GM12878 (cell line): ENCODE measurements at regions of chrX and their contacts with region 1.

Region 1: GRCh38 chrX:149205937-149206336 is 299.2 kb downstream of the IDS start:
- DNase-seq: no peak
- ATAC-seq: peak; percentile 59
- H3K4me3 ChIP-seq: no peak overlapping the region
- H3K27ac ChIP-seq: peak overlapping the region; percentile 49; the same call in 1 of the 2 replicates
- H3K4me1 ChIP-seq: no peaks in the 10 kb centered on the region
- H3K27me3 ChIP-seq: no peaks in the 10 kb centered on the region
- CTCF ChIP-seq: no peak
- EP300 ChIP-seq: no peak
- POLR2A ChIP-seq: no peak
- RAD21 ChIP-seq: no peak

Region 2: GRCh38 chrX:148380650-148381561 is 825.0 kb before region 1 on chrX:
- CTCF ChIA-PET with region 1: no interaction called
- POLR2A ChIA-PET with region 1: no interaction called
- RAD21 ChIA-PET with region 1: no interaction called
- SMC1A ChIA-PET with region 1: no interaction called
- in situ Hi-C with region 1: no loop called
- intact Hi-C with region 1: no loop called
- DNase-seq: peak; percentile 55
- ATAC-seq: peak; percentile 98
- H3K4me3 ChIP-seq: peak overlapping the region; percentile 56
- H3K27ac ChIP-seq: peak overlapping the region; percentile 47
- H3K4me1 ChIP-seq: peaks cover 6% of the 10 kb centered on the region; the same call in 1 of the 2 replicates
- H3K27me3 ChIP-seq: no peaks in the 10 kb centered on the region
- CTCF ChIP-seq: no peak
- EP300 ChIP-seq: 0 out of 4 replicates have a peak, but pooled peaks of 1 of the 2 experiments have one; percentile 9
- POLR2A ChIP-seq: no peak
- RAD21 ChIP-seq: no peak

Region 3: GRCh38 chrX:148609515-148610327 is 596.2 kb before region 1 on chrX:
- CTCF ChIA-PET with region 1: no interaction called
- POLR2A ChIA-PET with region 1: no interaction called
- RAD21 ChIA-PET with region 1: no interaction called
- SMC1A ChIA-PET with region 1: no interaction called
- in situ Hi-C with region 1: no loop called
- intact Hi-C with region 1: loop called (anchors 10 kb)
- DNase-seq: peak; percentile 40
- ATAC-seq: peak; percentile 90
- H3K4me3 ChIP-seq: peak overlapping the region; percentile 37
- H3K27ac ChIP-seq: peak overlapping the region; percentile 75
- H3K4me1 ChIP-seq: peaks cover 13% of the 10 kb centered on the region
- H3K27me3 ChIP-seq: no peaks in the 10 kb centered on the region
- CTCF ChIP-seq: no peak
- EP300 ChIP-seq: peak in 1 of 2 experiments; percentile 2; a peak in 1 of 4 replicates
- POLR2A ChIP-seq: no peak
- RAD21 ChIP-seq: no peak

Region 4: GRCh38 chrX:149120459-149120858 is 85.5 kb before region 1 on chrX:
- CTCF ChIA-PET with region 1: interaction called, 4 read pairs
- POLR2A ChIA-PET with region 1: interaction called, 4 read pairs
- RAD21 ChIA-PET with region 1: interaction called, 22 read pairs
- SMC1A ChIA-PET with region 1: interaction called, 9 read pairs
- in situ Hi-C with region 1: no loop called
- intact Hi-C with region 1: no loop called
- DNase-seq: no peak
- ATAC-seq: peak; percentile 64
- H3K4me3 ChIP-seq: no peak overlapping the region
- H3K27ac ChIP-seq: no peak overlapping the region
- H3K4me1 ChIP-seq: no peaks in the 10 kb centered on the region
- H3K27me3 ChIP-seq: no peaks in the 10 kb centered on the region
- CTCF ChIP-seq: 0 out of 6 replicates have a peak, but pooled peaks of 1 of the 3 experiments have one; percentile 3
- EP300 ChIP-seq: no peak
- POLR2A ChIP-seq: no peak
- RAD21 ChIP-seq: peak; percentile 6; the same call in 1 of the 2 replicates

Region 5: DNA sequence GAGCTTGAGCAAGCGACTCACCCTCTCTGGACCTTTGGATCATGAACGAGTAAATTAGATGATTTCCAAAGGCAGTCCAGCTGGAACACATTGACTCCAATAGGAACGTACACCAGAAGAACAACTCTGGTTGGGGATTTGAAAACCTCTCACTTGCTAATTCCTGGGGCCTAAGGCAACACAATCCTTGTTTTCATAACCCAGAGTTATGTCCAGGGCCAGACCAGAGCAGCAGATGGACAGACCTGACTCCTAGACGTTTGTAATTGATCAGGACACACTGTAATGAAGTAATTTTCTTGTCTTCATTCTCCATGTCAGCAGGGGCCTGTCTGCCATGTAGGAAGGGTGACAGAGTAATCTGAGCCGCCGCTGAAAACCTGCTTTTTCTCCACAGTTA is 15.3 kb after region 1 on chrX:
- CTCF ChIA-PET with region 1: interaction called, 5 read pairs
- POLR2A ChIA-PET with region 1: interaction called, 3 read pairs
- RAD21 ChIA-PET with region 1: interaction called, 4 read pairs
- SMC1A ChIA-PET with region 1: interaction called, 25 read pairs
- in situ Hi-C with region 1: no loop called
- intact Hi-C with region 1: no loop called
- DNase-seq: no peak
- ATAC-seq: no peak
- H3K4me3 ChIP-seq: no peak overlapping the region
- H3K27ac ChIP-seq: no peak overlapping the region
- H3K4me1 ChIP-seq: no peaks in the 10 kb centered on the region
- H3K27me3 ChIP-seq: no peaks in the 10 kb centered on the region
- CTCF ChIP-seq: no peak
- EP300 ChIP-seq: no peak
- POLR2A ChIP-seq: no peak
- RAD21 ChIP-seq: no peak

Region 6: DNA sequence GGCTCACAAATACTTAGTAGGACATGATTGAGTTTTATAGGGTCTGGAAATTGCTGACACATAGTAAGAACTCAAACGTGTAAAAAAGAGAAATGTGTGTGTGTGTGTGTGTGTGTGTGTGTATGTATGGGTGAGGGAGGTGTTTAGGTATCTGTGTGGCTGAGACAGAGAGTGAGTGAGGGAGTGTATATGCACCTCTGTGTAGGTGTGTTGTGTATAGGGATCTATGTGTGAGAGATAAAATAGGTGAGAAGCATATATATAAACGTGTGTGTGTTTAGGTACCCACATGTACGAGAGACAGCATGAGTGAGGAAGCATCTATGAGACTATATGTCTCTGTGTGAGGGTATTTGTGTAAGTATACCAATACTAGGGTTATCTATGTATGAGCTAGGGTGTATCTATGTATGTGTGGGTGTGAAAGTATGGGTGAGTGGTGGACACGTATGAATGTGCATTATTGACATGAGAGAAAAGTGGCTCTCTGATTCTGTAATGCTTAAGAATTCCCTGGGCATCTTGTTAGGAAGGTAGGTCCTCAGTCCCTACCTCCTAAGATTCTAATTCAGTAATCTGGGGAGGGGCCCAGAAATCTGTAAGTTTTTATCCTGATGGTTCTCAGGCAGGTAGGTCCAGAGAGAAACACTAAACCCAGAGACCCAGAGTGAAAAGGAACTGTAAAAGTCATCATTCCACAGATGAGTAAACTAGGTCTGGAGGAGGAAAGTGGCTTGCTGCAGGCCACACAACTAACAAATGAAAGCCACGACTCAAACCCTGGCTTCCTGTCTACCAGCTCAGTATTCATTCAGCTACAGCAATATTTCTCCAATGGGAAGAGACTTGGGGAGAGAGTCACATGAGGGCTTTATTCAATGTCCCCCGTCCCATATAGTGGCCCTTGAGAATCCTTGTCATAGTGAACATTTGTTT is 62.2 kb after region 1 on chrX:
- CTCF ChIA-PET with region 1: interaction called, 3 read pairs
- POLR2A ChIA-PET with region 1: interaction called, 4 read pairs
- RAD21 ChIA-PET with region 1: interaction called, 7 read pairs
- SMC1A ChIA-PET with region 1: interaction called, 23 read pairs
- in situ Hi-C with region 1: no loop called
- intact Hi-C with region 1: no loop called
- DNase-seq: peak; percentile 24
- ATAC-seq: peak; percentile 81
- H3K4me3 ChIP-seq: no peak overlapping the region
- H3K27ac ChIP-seq: no peak overlapping the region
- H3K4me1 ChIP-seq: no peaks in the 10 kb centered on the region
- H3K27me3 ChIP-seq: no peaks in the 10 kb centered on the region
- CTCF ChIP-seq: no peak
- EP300 ChIP-seq: no peak
- POLR2A ChIP-seq: no peak
- RAD21 ChIP-seq: no peak

Region 7: DNA sequence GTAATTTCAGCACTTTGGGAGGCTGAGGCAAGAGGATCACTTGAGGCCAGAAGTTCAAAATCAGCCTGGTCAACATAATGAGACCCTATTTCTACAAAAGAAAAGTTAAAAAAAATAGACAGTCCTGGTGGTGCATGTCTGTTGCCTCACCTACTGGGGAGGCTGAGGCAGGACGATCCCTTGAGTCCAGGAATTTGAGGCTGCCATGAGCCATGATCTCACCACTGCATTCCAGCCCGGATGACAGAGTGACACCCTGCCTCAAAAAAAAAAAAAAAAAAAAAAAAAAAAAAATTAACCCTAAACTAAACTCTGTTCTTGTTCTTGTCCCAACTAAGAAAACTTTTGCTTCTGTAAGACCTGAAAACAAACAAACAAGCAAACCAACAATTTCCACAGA is 181.0 kb after region 1 on chrX:
- CTCF ChIA-PET with region 1: no interaction called
- POLR2A ChIA-PET with region 1: no interaction called
- RAD21 ChIA-PET with region 1: no interaction called
- SMC1A ChIA-PET with region 1: no interaction called
- in situ Hi-C with region 1: no loop called
- intact Hi-C with region 1: no loop called
- DNase-seq: no peak
- ATAC-seq: no peak
- H3K4me3 ChIP-seq: no peak overlapping the region
- H3K27ac ChIP-seq: no peak overlapping the region
- H3K4me1 ChIP-seq: no peaks in the 10 kb centered on the region
- H3K27me3 ChIP-seq: no peaks in the 10 kb centered on the region
- CTCF ChIP-seq: no peak
- EP300 ChIP-seq: no peak
- POLR2A ChIP-seq: no peak
- RAD21 ChIP-seq: no peak